Activated B cell treated with CpG ODN at 0.5 μM for 24 hours (primary cell): ENCODE measurements at regions of chr5 and their contacts with region 1.

Region 1: DNA sequence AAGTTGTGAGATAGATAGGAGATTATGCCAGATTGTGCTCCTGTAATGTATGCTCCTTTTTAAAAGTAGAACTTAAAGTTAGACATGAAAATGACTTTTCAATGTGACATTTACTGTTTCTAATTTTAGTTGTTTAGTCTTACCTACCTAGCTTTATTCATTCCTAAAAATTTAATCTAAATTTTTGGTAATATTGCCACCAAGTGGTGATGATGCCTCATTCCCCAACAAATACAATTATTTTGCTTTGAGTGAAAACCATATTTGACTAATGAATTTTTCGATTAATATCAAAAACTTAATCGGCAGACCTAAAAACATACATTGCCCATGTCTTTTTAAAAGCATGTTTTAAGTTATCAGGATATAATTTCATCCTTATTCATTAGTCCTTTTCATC is 25.6 kb downstream of the PPWD1 start:
- DNase-seq: no peak
- ATAC-seq: no peak
- H3K4me3 Mint-ChIP-seq: no peak overlapping the region
- H3K27ac Mint-ChIP-seq: no peak overlapping the region
- H3K4me1 Mint-ChIP-seq: no peaks in the 10 kb centered on the region
- H3K27me3 Mint-ChIP-seq: no peaks in the 10 kb centered on the region
- CTCF ChIP-seq: no peak

Region 2: DNA sequence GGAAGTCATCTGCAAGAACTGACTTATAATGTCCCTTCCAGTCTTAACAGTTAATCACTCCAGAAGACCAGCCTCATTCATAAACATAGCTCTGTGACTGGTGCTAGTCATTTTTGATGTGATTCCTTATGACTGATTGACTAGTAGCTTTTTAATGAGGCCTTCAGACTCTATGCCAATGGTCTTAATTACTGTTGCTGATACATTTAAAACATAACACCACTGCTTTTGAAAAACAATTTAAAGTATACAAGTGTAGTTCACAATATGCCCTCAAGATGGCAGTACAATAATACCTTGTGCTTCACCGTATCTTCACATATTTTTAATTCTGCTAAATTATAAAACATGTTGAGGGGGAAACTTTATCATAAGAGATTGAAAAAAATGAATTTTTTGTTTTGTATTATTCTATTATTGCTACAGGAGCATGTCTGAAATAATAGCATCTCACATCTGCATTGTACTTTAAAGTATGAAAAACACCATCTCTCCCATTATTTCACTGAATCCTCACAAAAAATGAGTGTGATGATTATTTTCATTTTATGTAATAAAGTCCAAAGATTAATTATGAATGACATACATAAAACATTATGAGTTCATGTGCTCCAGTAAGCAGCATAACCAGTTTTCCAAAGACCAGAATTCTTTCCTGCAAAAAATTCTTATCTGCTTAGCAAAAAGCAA is 953.6 kb before region 1 on chr5:
- CTCF ChIA-PET with region 1: no interaction called
- POLR2A ChIA-PET with region 1: no interaction called
- intact Hi-C with region 1: loop called (anchors 10 kb)
- DNase-seq: no peak
- ATAC-seq: no peak
- H3K4me3 Mint-ChIP-seq: no peak overlapping the region
- H3K27ac Mint-ChIP-seq: no peak overlapping the region
- H3K4me1 Mint-ChIP-seq: no peaks in the 10 kb centered on the region
- H3K27me3 Mint-ChIP-seq: peaks cover 20% of the 10 kb centered on the region
- CTCF ChIP-seq: peak; percentile 76

Region 3: GRCh38 chr5:64811050-64811640 is 777.5 kb before region 1 on chr5:
- CTCF ChIA-PET with region 1: no interaction called
- POLR2A ChIA-PET with region 1: no interaction called
- intact Hi-C with region 1: loop called (anchors 5 kb)
- DNase-seq: no peak
- ATAC-seq: no peak
- H3K4me3 Mint-ChIP-seq: no peak overlapping the region
- H3K27ac Mint-ChIP-seq: no peak overlapping the region
- H3K4me1 Mint-ChIP-seq: no peaks in the 10 kb centered on the region
- H3K27me3 Mint-ChIP-seq: no peaks in the 10 kb centered on the region
- CTCF ChIP-seq: no peak

Region 4: DNA sequence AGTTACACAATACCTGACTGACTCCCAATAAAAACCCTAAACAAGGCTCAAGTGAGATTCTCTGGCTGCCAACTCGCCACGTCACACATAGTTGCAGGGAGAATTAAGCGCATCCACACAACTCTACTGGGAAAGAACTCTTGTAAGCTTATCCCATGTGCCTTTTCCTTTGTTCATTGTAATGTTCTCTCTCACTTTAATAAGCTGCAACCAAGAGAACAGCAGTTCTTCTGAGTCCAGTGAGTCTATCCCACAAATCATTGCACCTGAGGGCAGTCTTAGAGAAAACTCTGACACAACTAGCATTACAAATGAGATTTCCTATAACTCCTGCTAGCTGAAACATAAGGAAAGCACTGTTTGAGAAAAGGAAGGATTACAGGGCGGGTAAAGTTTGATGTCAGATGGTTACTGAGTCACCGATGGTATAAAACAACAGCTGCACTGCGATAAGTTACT is 53.1 kb before region 1 on chr5:
- CTCF ChIA-PET with region 1: no interaction called
- POLR2A ChIA-PET with region 1: no interaction called
- intact Hi-C with region 1: no loop called
- DNase-seq: no peak
- ATAC-seq: no peak
- H3K4me3 Mint-ChIP-seq: no peak overlapping the region
- H3K27ac Mint-ChIP-seq: no peak overlapping the region
- H3K4me1 Mint-ChIP-seq: no peaks in the 10 kb centered on the region
- H3K27me3 Mint-ChIP-seq: no peaks in the 10 kb centered on the region
- CTCF ChIP-seq: no peak

Region 5: DNA sequence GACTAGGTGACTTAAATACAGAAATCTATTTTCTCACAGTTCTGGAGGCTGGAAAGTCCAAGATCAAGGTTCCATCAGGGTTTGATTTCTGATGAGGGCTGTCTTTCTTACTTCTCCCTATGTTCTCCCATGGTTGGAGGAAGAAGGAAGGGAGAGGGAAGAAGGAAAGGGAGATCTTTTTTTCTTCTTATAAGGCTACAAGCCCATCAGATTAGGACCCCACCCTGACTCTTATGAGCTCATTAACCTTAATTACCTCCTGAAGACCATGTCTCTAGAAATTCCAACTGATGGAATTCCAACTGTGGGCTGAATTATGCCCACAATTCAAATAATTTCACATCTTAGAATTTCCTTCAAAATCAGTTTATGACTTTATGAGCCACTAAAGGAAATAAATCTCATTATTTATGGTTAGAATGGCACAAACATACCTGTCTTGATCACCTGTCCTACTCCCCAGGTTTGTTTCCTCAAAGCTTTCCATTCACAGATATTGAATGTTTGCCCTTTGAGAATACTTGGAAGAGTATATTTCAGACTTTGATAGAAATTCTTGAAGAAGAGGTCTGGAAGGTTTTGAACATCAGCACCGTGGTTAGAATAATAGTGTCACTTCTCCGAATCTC is 18.0 kb before region 1 on chr5:
- CTCF ChIA-PET with region 1: no interaction called
- POLR2A ChIA-PET with region 1: no interaction called
- intact Hi-C with region 1: loop called (anchors 2 kb)
- DNase-seq: no peak
- ATAC-seq: no peak
- H3K4me3 Mint-ChIP-seq: no peak overlapping the region
- H3K27ac Mint-ChIP-seq: no peak overlapping the region
- H3K4me1 Mint-ChIP-seq: peaks cover 8% of the 10 kb centered on the region
- H3K27me3 Mint-ChIP-seq: no peaks in the 10 kb centered on the region
- CTCF ChIP-seq: no peak